CD4-positive, alpha-beta T cell (primary cell): ENCODE measurements at regions of chr16 and their contacts with region 1.

Region 1: DNA sequence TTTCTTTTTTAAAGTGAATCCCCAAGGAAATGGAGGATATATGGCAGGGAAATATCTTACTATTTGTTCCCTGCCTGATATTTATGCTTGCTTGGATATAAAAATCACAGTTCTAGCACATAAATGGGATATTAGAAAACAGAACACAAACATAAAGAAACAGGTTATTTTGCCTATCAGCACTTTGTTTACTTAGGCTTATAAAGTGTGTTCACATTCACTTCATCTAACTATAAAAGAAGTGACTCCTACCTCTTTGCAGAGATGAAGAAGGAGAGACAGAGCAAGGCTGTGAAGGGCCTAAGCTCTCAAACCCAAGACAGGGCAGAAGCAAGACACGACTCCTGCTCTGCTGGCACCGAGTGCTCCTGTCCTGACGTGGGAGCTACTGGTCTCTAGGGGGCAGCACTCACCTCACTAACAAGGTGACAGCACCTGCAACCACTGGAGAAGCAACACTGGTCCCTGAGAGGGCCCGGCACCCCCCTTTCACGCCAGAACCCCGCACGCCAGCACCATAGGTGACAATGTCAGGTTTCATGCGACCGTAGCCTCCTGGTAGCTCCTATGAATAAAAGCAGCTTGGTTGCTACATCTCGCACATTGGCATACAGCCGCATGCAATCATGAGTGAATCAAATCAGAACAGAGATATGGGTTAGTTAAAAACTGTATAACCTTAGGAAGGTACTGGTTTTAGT is 32.0 kb downstream of the MBTPS1 start:
- DNase-seq: peak; percentile 50 to 87 (median 64)
- ATAC-seq: peak; percentile 85
- H3K4me3 ChIP-seq: no peak overlapping the region
- H3K4me3 Mint-ChIP-seq: peak overlapping the region; percentile 42
- H3K27ac ChIP-seq: no peak overlapping the region
- H3K27ac Mint-ChIP-seq: peak overlapping the region; percentile 63
- H3K4me1 ChIP-seq: peaks cover 28% of the 10 kb centered on the region
- H3K4me1 Mint-ChIP-seq: peaks cover 48% of the 10 kb centered on the region
- H3K27me3 ChIP-seq: no peaks in the 10 kb centered on the region
- H3K27me3 Mint-ChIP-seq: no peaks in the 10 kb centered on the region
- CTCF ChIP-seq: peak; percentile 81

Region 2: GRCh38 chr16:83196796-83197195 is 887.9 kb before region 1 on chr16:
- CTCF ChIA-PET with region 1: no interaction called
- POLR2A ChIA-PET with region 1: no interaction called
- intact Hi-C with region 1: no loop called
- DNase-seq: no peak
- ATAC-seq: no peak
- H3K4me3 ChIP-seq: no peak overlapping the region
- H3K4me3 Mint-ChIP-seq: no peak overlapping the region
- H3K27ac ChIP-seq: no peak overlapping the region
- H3K27ac Mint-ChIP-seq: no peak overlapping the region
- H3K4me1 ChIP-seq: no peaks in the 10 kb centered on the region
- H3K4me1 Mint-ChIP-seq: no peaks in the 10 kb centered on the region
- H3K27me3 ChIP-seq: no peaks in the 10 kb centered on the region
- H3K27me3 Mint-ChIP-seq: no peaks in the 10 kb centered on the region
- CTCF ChIP-seq: no peak

Region 3: DNA sequence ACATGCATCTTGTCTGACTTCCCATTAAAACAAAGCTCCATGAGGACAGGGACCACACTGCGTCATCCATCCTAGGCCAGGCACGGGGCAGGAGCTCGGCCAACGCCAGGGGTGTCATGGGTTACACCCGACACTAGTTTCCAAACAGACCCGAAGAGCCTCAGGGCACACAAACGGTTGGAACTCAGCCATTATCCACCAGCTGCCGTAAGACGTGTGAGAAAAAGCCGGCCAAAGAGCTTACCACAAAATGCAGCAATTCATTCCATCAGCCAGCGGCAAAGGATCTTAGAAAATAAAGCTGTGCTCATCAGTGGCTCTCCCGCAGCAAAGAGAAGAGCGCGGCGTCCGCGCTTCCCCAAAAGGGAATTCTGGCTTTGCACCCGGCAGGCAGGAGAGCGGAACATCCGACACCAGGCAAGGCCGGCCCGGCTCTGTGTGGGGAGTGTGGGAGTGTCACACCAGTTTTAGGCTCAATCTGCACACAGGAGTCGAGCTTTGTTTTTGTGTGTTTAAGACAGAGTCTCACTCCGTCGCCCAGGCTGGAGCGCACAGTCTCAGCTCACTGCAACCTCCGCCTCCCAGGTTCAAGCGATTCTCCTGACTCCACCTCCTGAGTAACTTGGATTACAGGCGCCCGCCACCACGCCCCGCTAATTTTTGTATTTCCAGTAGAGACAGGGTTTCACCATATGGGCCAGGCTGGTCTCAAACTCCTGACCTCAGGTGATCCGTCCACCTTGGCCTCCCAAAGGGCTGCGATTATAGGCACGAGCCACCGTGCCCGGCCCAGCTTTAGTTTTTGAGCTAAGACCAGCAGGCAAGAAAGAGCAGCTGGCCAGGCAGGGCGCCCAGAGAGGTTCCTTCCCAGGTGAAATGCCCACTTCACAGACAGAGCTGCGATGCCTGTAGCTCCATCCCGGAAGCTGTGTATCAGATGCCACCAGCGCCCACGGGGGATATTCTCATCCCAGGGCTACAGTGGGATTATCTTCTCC is 43.6 kb before region 1 on chr16:
- CTCF ChIA-PET with region 1: no interaction called
- POLR2A ChIA-PET with region 1: no interaction called
- intact Hi-C with region 1: no loop called
- DNase-seq: no peak
- ATAC-seq: no peak
- H3K4me3 ChIP-seq: no peak overlapping the region
- H3K4me3 Mint-ChIP-seq: no peak overlapping the region
- H3K27ac ChIP-seq: no peak overlapping the region
- H3K27ac Mint-ChIP-seq: no peak overlapping the region
- H3K4me1 ChIP-seq: no peaks in the 10 kb centered on the region
- H3K4me1 Mint-ChIP-seq: no peaks in the 10 kb centered on the region
- H3K27me3 ChIP-seq: peaks cover 5 to 6% of the 10 kb centered on the region in 2 experiments
- H3K27me3 Mint-ChIP-seq: peaks cover 19% of the 10 kb centered on the region
- CTCF ChIP-seq: no peak

Region 4: GRCh38 chr16:84116720-84117493 is 32.2 kb after region 1 on chr16 and contains the start of gene MBTPS1:
- CTCF ChIA-PET with region 1: interaction called, 14 read pairs
- POLR2A ChIA-PET with region 1: interaction called, 13 read pairs
- intact Hi-C with region 1: loop called in 1 of 2 experiments (anchors 2 kb)
- DNase-seq: peak; percentile 94 to 99 (median 98)
- ATAC-seq: peak; percentile 84
- H3K4me3 ChIP-seq: peak within 1 kb of the TSS; percentile 91
- H3K4me3 Mint-ChIP-seq: peak within 1 kb of the TSS; percentile 96
- H3K27ac ChIP-seq: peak within 1 kb of the TSS; percentile 84 to 85
- H3K27ac Mint-ChIP-seq: peak within 1 kb of the TSS; percentile 98
- H3K4me1 ChIP-seq: peaks cover 37% of the 10 kb centered on the region
- H3K4me1 Mint-ChIP-seq: peaks cover 34% of the 10 kb centered on the region
- H3K27me3 ChIP-seq: no peaks in the 10 kb centered on the region
- H3K27me3 Mint-ChIP-seq: no peaks in the 10 kb centered on the region
- CTCF ChIP-seq: peak; percentile 49
- total RNA-seq, gene MBTPS1: 121 to 122 TPM